HepG2 (cell line): ENCODE measurements at regions of chr1 and their contacts with region 1.

Region 1: DNA sequence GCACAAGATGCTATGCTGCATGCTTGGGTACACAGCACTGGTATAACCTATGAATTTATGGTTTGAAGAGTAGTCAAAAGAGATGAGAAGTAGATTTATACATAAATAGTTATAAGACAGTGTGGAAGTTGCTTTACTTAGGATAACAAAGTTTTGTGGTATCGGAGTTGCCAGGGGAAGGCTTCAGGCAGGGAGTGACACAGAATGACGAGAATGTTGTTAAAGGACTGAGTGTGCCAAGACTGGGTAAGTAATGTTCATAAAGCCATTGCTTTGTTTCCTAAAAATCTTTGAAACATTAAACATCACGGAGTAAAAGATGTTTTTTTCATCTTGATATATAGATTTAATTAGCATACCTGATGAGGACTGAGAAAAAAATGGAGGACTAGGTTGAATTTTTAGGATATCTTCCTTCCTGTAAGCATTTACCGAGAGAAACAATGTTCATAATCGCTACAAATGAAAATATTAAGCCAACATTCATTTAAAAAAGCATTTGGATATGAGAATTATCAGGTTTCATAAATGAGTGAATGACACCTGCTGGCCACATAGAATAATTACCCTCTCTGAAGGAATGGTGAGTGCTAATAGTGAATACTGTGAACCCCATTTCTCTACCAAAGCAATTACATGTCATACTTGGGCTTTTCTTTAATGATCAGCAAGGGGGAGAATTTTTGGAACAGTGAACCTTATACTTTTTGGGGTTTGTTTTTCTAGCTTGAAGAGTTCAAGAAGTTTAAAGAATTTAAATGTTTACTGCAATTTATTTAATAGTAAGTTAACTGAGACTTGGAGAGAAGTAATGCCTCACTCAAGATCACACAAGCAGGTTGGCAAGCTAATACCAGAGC is 28.4 kb downstream of the EXTL2 start:
- DNase-seq: peak; percentile 10
- ATAC-seq: peak; percentile 50; the same call in 1 of the 3 replicates
- H3K4me3 ChIP-seq: no peak overlapping the region
- H3K27ac ChIP-seq: no peak overlapping the region
- H3K4me1 ChIP-seq: no peaks in the 10 kb centered on the region
- H3K27me3 ChIP-seq: no peaks in the 10 kb centered on the region
- CTCF ChIP-seq: peak; percentile 62
- EP300 ChIP-seq: no peak
- POLR2A ChIP-seq: no peak
- RAD21 ChIP-seq: no peak

Region 2: GRCh38 chr1:99808391-99809115 is 1057.7 kb before region 1 on chr1:
- CTCF ChIA-PET with region 1: no interaction called
- POLR2A ChIA-PET with region 1: no interaction called
- in situ Hi-C with region 1: loop called (anchors 25 kb)
- intact Hi-C with region 1: loop called (anchors 5 kb)
- DNase-seq: peak; percentile 81
- ATAC-seq: peak; percentile 95
- H3K4me3 ChIP-seq: peak overlapping the region; percentile 17 to 30 (median 24); a peak in 2 of 6 replicates
- H3K27ac ChIP-seq: no peak overlapping the region
- H3K4me1 ChIP-seq: peaks cover 13% of the 10 kb centered on the region; the same call in 1 of the 2 replicates
- H3K27me3 ChIP-seq: no peaks in the 10 kb centered on the region
- CTCF ChIP-seq: peak; percentile 85
- EP300 ChIP-seq: no peak
- POLR2A ChIP-seq: no peak
- RAD21 ChIP-seq: peak; percentile 81

Region 3: GRCh38 chr1:100543640-100544039 is 322.6 kb before region 1 on chr1:
- CTCF ChIA-PET with region 1: no interaction called
- POLR2A ChIA-PET with region 1: no interaction called
- in situ Hi-C with region 1: no loop called
- intact Hi-C with region 1: loop called (anchors 5 kb)
- DNase-seq: peak; percentile 40
- ATAC-seq: peak; percentile 90
- H3K4me3 ChIP-seq: no peak overlapping the region
- H3K27ac ChIP-seq: no peak overlapping the region
- H3K4me1 ChIP-seq: peaks cover 17% of the 10 kb centered on the region
- H3K27me3 ChIP-seq: peaks cover 0 to 5% of the 10 kb centered on the region in 2 experiments; a peak in 3 of 5 replicates
- CTCF ChIP-seq: peak; percentile 51
- EP300 ChIP-seq: no peak
- POLR2A ChIP-seq: no peak
- RAD21 ChIP-seq: 0 out of 2 replicates have a peak, but pooled peaks have one; percentile 33

Region 4: DNA sequence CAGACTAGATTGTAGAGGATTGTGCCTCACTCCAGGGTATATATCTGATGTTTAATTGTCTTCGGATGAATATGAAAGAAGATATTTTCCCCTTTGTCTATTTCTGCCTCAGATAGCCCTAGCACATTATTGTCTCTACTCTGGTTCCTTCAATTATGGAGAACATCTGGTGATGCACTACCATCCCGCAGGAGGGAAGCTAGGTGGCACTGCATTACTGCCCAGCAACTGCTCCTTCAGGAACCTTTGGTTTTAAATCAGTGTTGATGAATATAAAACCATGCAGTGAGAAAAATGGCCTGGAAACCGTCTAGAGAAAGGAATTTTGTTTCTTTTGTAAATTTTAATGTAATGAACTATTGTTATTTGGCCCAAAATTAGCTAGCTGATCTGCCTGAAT is 259.8 kb before region 1 on chr1:
- CTCF ChIA-PET with region 1: interaction called, 5 read pairs
- POLR2A ChIA-PET with region 1: no interaction called
- in situ Hi-C with region 1: loop called (anchors 10 kb)
- intact Hi-C with region 1: loop called (anchors 1 kb)
- DNase-seq: no peak
- ATAC-seq: peak; percentile 75
- H3K4me3 ChIP-seq: no peak overlapping the region
- H3K27ac ChIP-seq: no peak overlapping the region
- H3K4me1 ChIP-seq: no peaks in the 10 kb centered on the region
- H3K27me3 ChIP-seq: no peaks in the 10 kb centered on the region; a peak in 1 of 5 replicates
- CTCF ChIP-seq: peak; percentile 65
- EP300 ChIP-seq: no peak
- POLR2A ChIP-seq: no peak
- RAD21 ChIP-seq: no peak

Region 5: DNA sequence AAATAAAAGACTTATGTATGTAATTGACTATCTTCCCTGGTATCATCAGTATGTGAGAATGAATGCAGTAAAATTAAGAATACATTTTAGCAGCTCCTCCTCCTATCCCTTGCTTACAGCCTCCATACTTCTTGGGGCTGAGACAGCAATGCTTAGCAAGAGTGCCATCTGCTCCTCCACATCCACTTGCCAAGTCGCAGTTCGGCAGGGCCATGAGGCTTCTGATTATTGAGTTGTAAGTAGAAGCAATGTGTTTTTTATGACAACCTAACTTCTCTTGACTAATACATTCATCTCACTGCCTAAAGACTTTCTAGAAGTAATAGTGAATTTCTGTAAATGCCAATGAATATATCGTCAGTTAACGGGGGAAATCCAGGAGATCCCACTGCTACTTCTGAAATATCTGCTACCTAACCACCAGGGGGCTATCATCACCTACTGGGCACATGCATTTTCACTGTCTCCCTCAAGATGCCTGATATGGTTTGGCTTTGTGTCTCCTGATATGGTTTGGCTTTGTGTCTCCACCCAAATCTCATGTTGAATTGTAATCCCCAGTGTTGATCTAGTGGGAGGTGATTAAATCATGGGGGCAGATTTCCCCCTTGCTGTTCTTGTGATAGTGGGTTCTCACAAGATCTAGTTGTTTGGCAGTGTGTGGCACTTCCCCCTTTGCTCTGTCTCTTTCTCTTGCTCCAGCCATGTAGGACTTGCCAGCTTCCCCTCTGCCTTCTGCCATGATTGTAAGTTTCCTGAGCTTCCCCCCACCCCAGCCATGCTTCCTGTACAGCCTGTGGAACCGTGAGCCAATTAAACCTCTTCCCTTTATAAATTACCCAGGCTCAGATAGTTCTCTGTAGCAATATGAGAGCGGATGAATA is 31.3 kb before region 1 on chr1:
- CTCF ChIA-PET with region 1: interaction called, 6 read pairs
- POLR2A ChIA-PET with region 1: no interaction called
- in situ Hi-C with region 1: no loop called
- intact Hi-C with region 1: loop called (anchors 2 kb)
- DNase-seq: peak; percentile 25
- ATAC-seq: peak; percentile 87
- H3K4me3 ChIP-seq: no peak overlapping the region
- H3K27ac ChIP-seq: no peak overlapping the region
- H3K4me1 ChIP-seq: no peaks in the 10 kb centered on the region
- H3K27me3 ChIP-seq: no peaks in the 10 kb centered on the region
- CTCF ChIP-seq: peak; percentile 58
- EP300 ChIP-seq: no peak
- POLR2A ChIP-seq: no peak
- RAD21 ChIP-seq: no peak